Lower leg skin (tissue), 4 donors: ENCODE measurements at regions of chr6 and their contacts with region 1.

Region 1: GRCh38 chr6:168884646-168885086 is 369.0 kb downstream of the THBS2 start:
- DNase-seq: peak; percentile 43 to 95
- H3K4me3 ChIP-seq: no peak overlapping the region
- CTCF ChIP-seq: peak in 1 of 3 donors; percentile 70
- POLR2A ChIP-seq: no peak

Region 2: DNA sequence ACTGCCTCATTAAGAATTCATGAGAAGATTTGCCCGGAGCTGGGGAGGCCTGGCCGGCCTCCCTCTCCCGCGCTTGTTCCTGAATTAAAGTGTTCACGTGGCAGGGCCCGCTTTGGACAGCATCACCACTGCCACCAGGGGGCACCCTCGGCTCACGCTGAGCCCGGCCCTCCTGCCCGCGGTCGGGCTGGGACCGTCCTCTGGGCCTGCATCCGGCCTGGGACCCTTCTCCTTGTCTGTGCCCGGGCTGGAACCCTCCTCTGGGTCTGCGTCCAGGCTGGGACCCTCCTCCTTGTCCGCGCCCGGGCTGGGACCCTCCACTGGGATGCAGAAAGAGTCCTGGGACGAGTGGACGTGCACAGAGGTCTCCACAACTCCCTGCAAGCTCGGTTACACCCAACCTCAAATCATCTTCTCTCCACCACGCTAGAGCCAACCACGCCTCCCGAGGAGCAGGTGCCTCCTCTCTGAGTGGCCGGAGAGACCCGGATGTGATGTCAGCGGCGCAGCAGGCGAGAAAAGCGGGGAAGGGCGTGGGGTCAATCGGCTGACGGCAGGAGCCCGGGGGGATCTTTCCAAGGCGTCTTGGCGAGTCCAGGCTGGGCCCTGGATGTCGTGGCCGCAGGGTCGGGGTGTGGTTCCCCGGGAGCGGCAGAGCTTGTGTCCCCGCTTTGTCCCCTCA is 514.2 kb before region 1 on chr6:
- intact Hi-C with region 1: loop called (anchors 2 kb)
- DNase-seq: peak; percentile 54 to 94
- H3K4me3 ChIP-seq: no peak overlapping the region
- CTCF ChIP-seq: peak in 1 of 3 donors; percentile 59
- POLR2A ChIP-seq: no peak

Region 3: GRCh38 chr6:168919470-168920179 is 35.0 kb after region 1 on chr6:
- intact Hi-C with region 1: no loop called
- DNase-seq: peak in 1 of 2 donors; percentile 77
- H3K4me3 ChIP-seq: no peak overlapping the region
- CTCF ChIP-seq: no peak
- POLR2A ChIP-seq: no peak